GM18951 (cell line): ENCODE measurements at regions of chr19 and their contacts with region 1.

Region 1: DNA sequence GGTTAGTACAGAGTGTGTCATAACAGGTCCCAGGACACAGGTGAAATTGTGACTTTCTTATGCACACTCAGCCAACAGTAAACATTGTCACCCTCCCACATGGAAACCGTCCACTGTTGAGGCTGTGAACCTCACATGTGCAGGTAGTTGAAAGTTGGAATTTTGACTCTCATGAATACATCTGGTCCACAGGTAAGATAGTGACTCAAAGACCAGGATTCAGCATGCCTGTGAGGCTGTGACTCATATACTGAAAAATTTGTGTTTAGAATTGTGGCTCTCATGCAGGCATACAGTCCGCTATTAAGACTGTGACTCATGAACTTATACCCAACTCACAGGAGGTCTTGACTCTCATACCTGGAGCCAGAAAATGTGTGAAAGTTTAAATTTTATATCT is 67.8 kb downstream of the ZNF728 start:
- POLR2A ChIP-seq: no peak

Region 2: GRCh38 chr19:21940684-21941083 is 994.5 kb before region 1 on chr19:
- in situ Hi-C with region 1: loop called (anchors 5 kb)
- POLR2A ChIP-seq: no peak